Mammary epithelial cell (primary cell): ENCODE measurements at regions of chr6 and their contacts with region 1.

Region 1: GRCh38 chr6:25369433-25370181 is 90.4 kb downstream of the CARMIL1 start:
- DNase-seq: peak; percentile 17
- H3K4me3 ChIP-seq: no peak overlapping the region
- H3K27ac ChIP-seq: peak overlapping the region; percentile 47
- H3K4me1 ChIP-seq: peaks cover 27% of the 10 kb centered on the region
- H3K27me3 ChIP-seq: no peaks in the 10 kb centered on the region
- CTCF ChIP-seq: no peak

Region 2: GRCh38 chr6:25458485-25458884 is 88.9 kb after region 1 on chr6:
- CTCF ChIA-PET with region 1: no interaction called
- dilution Hi-C with region 1: no loop called
- in situ Hi-C with region 1: no loop called
- intact Hi-C with region 1: loop called (anchors 10 kb)
- DNase-seq: peak; percentile 86
- H3K4me3 ChIP-seq: no peak overlapping the region
- H3K27ac ChIP-seq: peak overlapping the region; percentile 37
- H3K4me1 ChIP-seq: peaks cover 27% of the 10 kb centered on the region
- H3K27me3 ChIP-seq: no peaks in the 10 kb centered on the region
- CTCF ChIP-seq: no peak